ENCODE measurements at regions of chr7 and their contacts with region 1.

Region 1: DNA sequence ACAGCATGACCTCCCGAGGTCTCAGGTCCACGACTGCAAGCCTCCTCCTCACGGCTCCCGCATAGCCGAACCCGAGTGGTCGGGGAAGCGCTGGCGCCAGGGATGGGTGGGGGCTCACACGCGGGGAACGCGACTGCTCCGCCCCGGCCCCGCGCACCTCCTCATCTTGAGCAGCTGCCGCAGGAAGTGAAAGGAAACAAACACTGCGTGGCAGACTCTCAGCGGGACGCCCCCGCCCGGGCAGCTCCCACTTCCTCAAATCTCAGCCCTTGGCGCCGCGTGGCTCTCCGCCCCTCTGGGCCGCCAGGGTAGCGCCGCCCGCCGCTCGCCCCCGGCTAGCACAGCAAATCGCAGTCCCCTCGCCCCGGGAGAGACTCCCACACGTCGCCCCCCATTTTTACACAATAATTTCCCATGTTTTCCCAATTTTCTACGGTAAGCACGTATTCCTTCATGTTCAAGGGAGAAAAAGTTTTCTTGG is at the start of gene TMEM243:
- DNase-seq: peak; percentile 80
- H3K4me3 Mint-ChIP-seq: peak within 1 kb of the TSS; percentile 99
- H3K27ac Mint-ChIP-seq: peak within 1 kb of the TSS; percentile 97
- H3K4me1 Mint-ChIP-seq: peaks cover 30% of the 10 kb centered on the region
- H3K27me3 Mint-ChIP-seq: peaks cover 13% of the 10 kb centered on the region
- total RNA-seq, gene TMEM243: 41.8 and 43.8 TPM in 2 replicates

Region 2: GRCh38 chr7:87038993-87039716 is 180.4 kb before region 1 on chr7:
- intact Hi-C with region 1: no loop called
- DNase-seq: no peak
- H3K4me3 Mint-ChIP-seq: peak overlapping the region; percentile 70
- H3K27ac Mint-ChIP-seq: peak overlapping the region; percentile 18
- H3K4me1 Mint-ChIP-seq: no peaks in the 10 kb centered on the region
- H3K27me3 Mint-ChIP-seq: no peaks in the 10 kb centered on the region

Region 3: DNA sequence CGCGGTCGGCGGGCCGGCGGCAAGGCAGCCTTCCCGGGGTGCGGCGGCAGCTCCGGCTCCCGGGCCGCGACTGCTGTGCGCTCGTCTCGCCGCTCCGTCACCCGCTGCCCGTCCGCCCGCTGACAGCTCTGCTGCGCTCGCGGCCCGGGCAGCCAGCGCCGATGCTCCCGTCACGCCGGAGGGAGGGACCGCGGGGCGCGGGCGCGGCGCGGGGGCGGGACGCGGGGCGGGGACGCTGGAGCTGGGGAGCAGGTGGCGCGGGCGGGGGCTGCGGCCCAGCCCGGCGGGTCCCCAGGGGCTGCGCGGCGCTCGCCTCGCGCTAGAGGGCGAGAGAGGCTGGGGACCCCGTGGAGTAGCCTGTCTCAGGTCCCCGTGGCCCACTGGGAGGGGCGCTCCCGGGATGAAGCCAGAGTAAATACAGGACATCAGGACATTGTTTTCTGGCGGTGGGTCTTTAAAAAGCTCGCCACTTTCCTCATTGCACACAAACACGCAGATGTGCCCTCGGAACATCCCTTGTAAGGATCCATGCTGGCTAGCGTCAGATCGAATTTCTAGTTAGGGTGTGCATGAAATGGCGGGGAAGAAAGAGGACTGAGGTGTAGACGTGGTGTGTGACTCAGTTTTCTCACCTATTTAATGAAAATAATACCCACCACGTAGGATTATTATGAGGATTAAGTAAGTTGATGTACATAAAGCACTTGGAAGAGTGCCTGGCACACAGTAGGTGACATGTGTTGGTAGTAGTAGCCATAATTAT is 159.9 kb before region 1 on chr7 and contains the start of gene ELAPOR2:
- intact Hi-C with region 1: loop called (anchors 5 kb)
- DNase-seq: peak; percentile 71
- H3K4me3 Mint-ChIP-seq: peak within 1 kb of the TSS; percentile 71
- H3K27ac Mint-ChIP-seq: no peak within 1 kb of the TSS
- H3K4me1 Mint-ChIP-seq: peaks cover 11% of the 10 kb centered on the region
- H3K27me3 Mint-ChIP-seq: peaks cover 17% of the 10 kb centered on the region
- total RNA-seq, gene ELAPOR2: 2.4 and 2.7 TPM in 2 replicates

Region 4: DNA sequence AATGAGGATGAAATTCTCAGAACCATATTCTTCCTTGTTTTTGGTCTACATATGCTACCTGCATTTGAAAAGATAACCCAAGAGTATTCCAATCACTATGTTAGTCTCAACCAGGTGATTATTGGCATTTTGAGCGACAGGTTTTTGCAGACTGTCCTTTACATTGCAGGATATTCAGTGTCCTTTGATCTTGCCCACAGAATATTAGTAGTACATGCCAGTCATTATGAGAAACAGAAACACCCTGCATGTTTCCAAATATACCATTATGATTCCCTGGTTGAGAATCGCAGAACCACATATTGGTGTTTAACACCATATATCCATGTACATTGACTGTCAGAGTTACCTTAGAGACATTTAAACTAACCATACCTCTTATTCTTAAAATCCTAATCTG is 30.7 kb before region 1 on chr7:
- intact Hi-C with region 1: loop called (anchors 2 kb)
- DNase-seq: no peak
- H3K4me3 Mint-ChIP-seq: no peak overlapping the region
- H3K27ac Mint-ChIP-seq: no peak overlapping the region
- H3K4me1 Mint-ChIP-seq: peaks cover 16% of the 10 kb centered on the region
- H3K27me3 Mint-ChIP-seq: no peaks in the 10 kb centered on the region

Region 5: GRCh38 chr7:87231256-87231655 is 11.7 kb after region 1 on chr7:
- intact Hi-C with region 1: loop called (anchors 2 kb)
- DNase-seq: no peak
- H3K4me3 Mint-ChIP-seq: no peak overlapping the region
- H3K27ac Mint-ChIP-seq: no peak overlapping the region
- H3K4me1 Mint-ChIP-seq: peaks cover 5% of the 10 kb centered on the region
- H3K27me3 Mint-ChIP-seq: peaks cover 18% of the 10 kb centered on the region

Region 6: DNA sequence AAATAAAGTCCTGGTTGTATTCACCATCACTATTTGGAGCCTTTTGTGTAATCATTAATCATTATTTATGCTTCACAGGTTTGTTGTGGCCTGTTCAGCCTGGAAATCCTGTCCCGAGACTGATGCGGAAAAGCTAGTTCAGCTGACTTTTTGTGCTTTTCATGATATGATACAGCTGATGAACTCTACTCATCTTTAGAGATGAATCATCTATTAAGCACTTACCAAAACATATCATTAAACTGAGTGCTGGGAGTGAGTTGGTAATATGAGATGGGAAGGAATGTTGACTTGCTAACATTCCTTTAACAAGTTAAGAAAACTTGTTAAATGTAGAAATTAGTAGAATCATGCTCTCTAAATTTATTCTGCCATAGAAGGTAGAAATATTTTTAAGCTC is 178.9 kb after region 1 on chr7:
- intact Hi-C with region 1: no loop called
- DNase-seq: no peak
- H3K4me3 Mint-ChIP-seq: no peak overlapping the region
- H3K27ac Mint-ChIP-seq: no peak overlapping the region
- H3K4me1 Mint-ChIP-seq: peaks cover 2% of the 10 kb centered on the region
- H3K27me3 Mint-ChIP-seq: no peaks in the 10 kb centered on the region

Region 7: GRCh38 chr7:87628780-87629569 is 409.4 kb after region 1 on chr7:
- intact Hi-C with region 1: loop called (anchors 5 kb)
- DNase-seq: no peak
- H3K4me3 Mint-ChIP-seq: peak overlapping the region; percentile 60
- H3K27ac Mint-ChIP-seq: no peak overlapping the region
- H3K4me1 Mint-ChIP-seq: peaks cover 8% of the 10 kb centered on the region
- H3K27me3 Mint-ChIP-seq: peaks cover 21% of the 10 kb centered on the region

Measured in activated T-helper 2 cell treated with anti-CD3 and anti-CD28 coated beads, Interferon-gamma antibody, Interleukin-2, Interleukin-4, amounts not matched to agents 10 μg/mL and 5 μg/mL and 100 μg/mL, durations not matched to agents 14 hours and 24 hours and 36 hours (primary cell).